GM12878 (cell line): ENCODE measurements at regions of chr2 and their contacts with region 1.

Region 1: DNA sequence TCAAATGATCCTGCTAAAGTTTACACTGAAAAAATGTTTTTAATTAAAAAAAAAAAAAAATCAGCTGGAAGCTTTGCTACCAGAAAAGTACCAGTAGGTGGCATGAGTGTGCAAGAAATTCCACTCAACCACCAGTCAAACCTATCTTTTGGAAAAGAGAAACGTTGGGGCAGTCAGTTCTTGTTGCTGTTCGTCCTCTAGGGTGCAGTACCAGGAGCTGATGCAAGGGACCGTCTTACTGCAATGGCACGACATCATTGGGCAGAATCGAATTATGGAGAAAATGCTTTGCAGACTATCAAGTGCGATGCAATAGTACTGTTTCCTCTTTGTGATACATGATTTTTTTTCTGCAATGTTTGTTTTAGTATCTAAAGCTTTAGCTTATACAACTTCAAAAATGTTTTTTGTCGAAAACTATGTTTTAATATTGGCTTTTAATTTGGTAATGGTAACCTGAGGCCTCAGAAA is 18.3 kb downstream of the YPEL5 start:
- DNase-seq: peak; percentile 57
- ATAC-seq: peak; percentile 99
- H3K4me3 ChIP-seq: no peak overlapping the region
- H3K27ac ChIP-seq: no peak overlapping the region
- H3K4me1 ChIP-seq: no peaks in the 10 kb centered on the region; the same call in 1 of the 2 replicates
- H3K27me3 ChIP-seq: peaks cover 0 to 2% of the 10 kb centered on the region in 2 experiments; a peak in 1 of 4 replicates
- CTCF ChIP-seq: peak; percentile 71 to 91 (median 89)
- EP300 ChIP-seq: no peak
- POLR2A ChIP-seq: no peak
- RAD21 ChIP-seq: peak; percentile 92

Region 2: GRCh38 chr2:30146438-30147147 is 18.5 kb before region 1 on chr2 and contains the start of gene YPEL5:
- CTCF ChIA-PET with region 1: interaction called, 116 read pairs
- POLR2A ChIA-PET with region 1: interaction called, 20 read pairs
- RAD21 ChIA-PET with region 1: interaction called, 97 read pairs
- SMC1A ChIA-PET with region 1: interaction called, 85 read pairs
- in situ Hi-C with region 1: no loop called
- intact Hi-C with region 1: no loop called
- DNase-seq: peak; percentile 97
- ATAC-seq: peak; percentile 96
- H3K4me3 ChIP-seq: peak within 1 kb of the TSS; percentile 78
- H3K27ac ChIP-seq: peak within 1 kb of the TSS; percentile 83
- H3K4me1 ChIP-seq: peaks cover 25% of the 10 kb centered on the region
- H3K27me3 ChIP-seq: no peaks in the 10 kb centered on the region
- CTCF ChIP-seq: no peak
- EP300 ChIP-seq: peak in 1 of 2 experiments; percentile 78; a peak in 1 of 4 replicates
- POLR2A ChIP-seq: peak; percentile 82
- RAD21 ChIP-seq: no peak
- polyA plus RNA-seq, gene YPEL5: 24.9 to 43.6 TPM

Region 3: DNA sequence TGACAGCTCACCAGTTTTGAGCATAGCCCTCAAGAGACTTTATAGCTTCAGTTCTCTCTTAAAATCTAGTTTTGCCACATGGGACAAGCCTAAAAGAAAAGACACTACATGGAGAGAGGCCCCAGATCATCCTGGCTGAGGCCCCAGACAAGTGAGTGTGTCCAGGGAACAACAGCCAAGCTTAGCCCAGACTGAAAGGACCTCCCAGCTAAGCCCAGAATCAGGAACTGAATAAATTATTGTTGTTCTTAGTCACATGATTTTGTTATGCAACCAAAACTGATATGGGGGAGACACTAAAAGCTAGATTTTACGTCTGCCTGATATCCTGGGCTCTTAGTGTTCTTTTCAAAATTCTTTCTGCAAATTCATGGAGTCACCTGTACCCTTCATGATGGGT is 36.9 kb after region 1 on chr2:
- CTCF ChIA-PET with region 1: interaction called, 132 read pairs
- POLR2A ChIA-PET with region 1: no interaction called
- RAD21 ChIA-PET with region 1: interaction called, 71 read pairs
- SMC1A ChIA-PET with region 1: interaction called, 62 read pairs
- in situ Hi-C with region 1: no loop called
- intact Hi-C with region 1: loop called (anchors 5 kb)
- DNase-seq: no peak
- ATAC-seq: no peak
- H3K4me3 ChIP-seq: no peak overlapping the region
- H3K27ac ChIP-seq: no peak overlapping the region
- H3K4me1 ChIP-seq: no peaks in the 10 kb centered on the region; the same call in 1 of the 2 replicates
- H3K27me3 ChIP-seq: no peaks in the 10 kb centered on the region; a peak in 1 of 4 replicates
- CTCF ChIP-seq: no peak
- EP300 ChIP-seq: no peak
- POLR2A ChIP-seq: no peak
- RAD21 ChIP-seq: no peak

Region 4: DNA sequence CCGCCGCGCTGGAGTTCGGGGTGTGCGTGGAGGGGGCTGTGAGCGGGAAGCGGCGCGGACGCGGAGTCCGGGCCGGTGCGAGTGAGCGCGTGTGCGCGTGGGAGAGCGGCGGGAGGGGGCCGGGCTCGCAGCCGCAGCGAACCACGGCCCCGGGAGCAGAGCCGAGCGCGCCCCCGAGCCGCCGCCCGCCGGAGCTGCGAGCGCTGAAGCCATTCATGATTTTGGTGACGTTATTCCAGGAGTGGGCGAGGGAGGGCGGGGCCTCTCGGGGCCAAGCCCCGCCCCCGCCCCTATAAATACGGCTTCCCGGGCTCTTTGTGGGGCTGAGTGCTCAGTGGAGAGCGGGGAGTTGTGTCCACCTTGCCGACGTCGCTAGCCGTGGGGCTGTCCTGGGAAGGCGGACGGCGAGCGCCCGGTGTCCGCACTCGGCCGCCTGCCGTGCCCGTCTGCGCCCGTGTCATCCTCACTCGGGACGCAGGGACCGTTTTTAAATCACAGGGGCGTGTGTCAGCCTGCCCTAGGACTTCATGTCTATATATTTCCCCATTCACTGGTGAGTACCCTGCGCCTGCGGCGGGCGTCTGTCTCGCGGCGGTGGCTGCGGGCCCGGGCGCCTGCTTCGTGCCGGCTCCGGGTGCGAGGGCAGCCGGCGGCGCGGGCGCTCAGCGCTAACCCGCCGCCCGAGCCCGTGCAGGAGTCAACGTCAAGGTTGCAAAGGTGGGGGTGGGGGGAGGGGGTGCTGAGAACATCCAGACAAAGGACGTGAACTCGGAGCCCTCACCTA is 66.3 kb after region 1 on chr2 and contains the start of gene LBH:
- CTCF ChIA-PET with region 1: interaction called, 22 read pairs
- POLR2A ChIA-PET with region 1: interaction called, 5 read pairs
- RAD21 ChIA-PET with region 1: interaction called, 25 read pairs
- SMC1A ChIA-PET with region 1: interaction called, 15 read pairs
- in situ Hi-C with region 1: no loop called
- intact Hi-C with region 1: no loop called
- DNase-seq: peak; percentile 56
- ATAC-seq: peak; percentile 59
- H3K4me3 ChIP-seq: peak within 1 kb of the TSS; percentile 80
- H3K27ac ChIP-seq: peak within 1 kb of the TSS; percentile 58
- H3K4me1 ChIP-seq: peaks cover 47% of the 10 kb centered on the region
- H3K27me3 ChIP-seq: no peaks in the 10 kb centered on the region
- CTCF ChIP-seq: peak in 1 of 3 experiments; percentile 31; a peak in 1 of 6 replicates
- EP300 ChIP-seq: peak in 1 of 2 experiments; percentile 27; a peak in 1 of 4 replicates
- POLR2A ChIP-seq: peak; percentile 99
- RAD21 ChIP-seq: peak; percentile 24; the same call in 1 of the 2 replicates
- polyA plus RNA-seq, gene LBH: 9.3 to 26.5 TPM

Region 5: DNA sequence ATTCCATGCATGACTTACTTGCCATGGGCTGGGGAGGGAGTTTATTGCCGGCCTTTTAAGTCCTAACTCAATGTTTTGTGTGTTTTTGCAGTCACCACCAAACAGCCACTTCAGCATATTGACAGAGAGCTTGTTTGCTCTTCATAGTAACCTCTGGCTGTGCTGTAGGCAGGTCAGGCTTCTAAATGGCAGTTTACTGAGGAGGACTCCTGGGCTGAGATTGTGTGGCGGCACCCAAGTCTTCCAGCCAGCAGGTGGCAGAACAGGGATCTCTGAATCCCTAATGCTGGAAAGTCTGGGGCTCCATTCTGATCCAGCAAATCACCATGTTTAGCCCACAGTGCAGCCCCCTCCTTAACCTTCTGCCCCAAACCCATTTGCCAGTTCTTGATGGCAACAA is 520.9 kb after region 1 on chr2:
- CTCF ChIA-PET with region 1: interaction called, 12 read pairs
- POLR2A ChIA-PET with region 1: no interaction called
- RAD21 ChIA-PET with region 1: interaction called, 9 read pairs
- SMC1A ChIA-PET with region 1: interaction called, 7 read pairs
- in situ Hi-C with region 1: no loop called
- intact Hi-C with region 1: no loop called
- DNase-seq: no peak
- ATAC-seq: peak; percentile 61
- H3K4me3 ChIP-seq: no peak overlapping the region
- H3K27ac ChIP-seq: no peak overlapping the region
- H3K4me1 ChIP-seq: no peaks in the 10 kb centered on the region
- H3K27me3 ChIP-seq: no peaks in the 10 kb centered on the region
- CTCF ChIP-seq: peak; percentile 30 to 35 (median 33); a peak in 5 of 6 replicates
- EP300 ChIP-seq: no peak
- POLR2A ChIP-seq: no peak
- RAD21 ChIP-seq: no peak

Region 6: GRCh38 chr2:31333527-31334183 is 1168.6 kb after region 1 on chr2:
- CTCF ChIA-PET with region 1: interaction called, 4 read pairs
- POLR2A ChIA-PET with region 1: no interaction called
- RAD21 ChIA-PET with region 1: no interaction called
- SMC1A ChIA-PET with region 1: no interaction called
- in situ Hi-C with region 1: loop called (anchors 10 kb)
- intact Hi-C with region 1: no loop called
- DNase-seq: peak; percentile 24
- ATAC-seq: peak; percentile 98
- H3K4me3 ChIP-seq: no peak overlapping the region
- H3K27ac ChIP-seq: no peak overlapping the region
- H3K4me1 ChIP-seq: no peaks in the 10 kb centered on the region
- H3K27me3 ChIP-seq: peaks cover 0 to 3% of the 10 kb centered on the region in 2 experiments; a peak in 1 of 4 replicates
- CTCF ChIP-seq: peak; percentile 96 to 98 (median 97)
- EP300 ChIP-seq: no peak
- POLR2A ChIP-seq: no peak
- RAD21 ChIP-seq: peak; percentile 99